ENCODE measurements at regions of chr20 and their contacts with region 1.

Region 1: GRCh38 chr20:38412877-38413577 is 22.1 kb downstream of the SNHG17 start:
- DNase-seq: peak in 1 of 2 experiments; percentile 34
- H3K4me3 ChIP-seq: no peak overlapping the region
- H3K4me3 Mint-ChIP-seq: no peak overlapping the region
- H3K27ac Mint-ChIP-seq: no peak overlapping the region
- H3K4me1 ChIP-seq: peaks cover 7% of the 10 kb centered on the region; the same call in 1 of the 2 replicates
- H3K4me1 Mint-ChIP-seq: peaks cover 9% of the 10 kb centered on the region
- H3K27me3 ChIP-seq: no peaks in the 10 kb centered on the region
- H3K27me3 Mint-ChIP-seq: no peaks in the 10 kb centered on the region
- CTCF ChIP-seq: no peak

Region 2: GRCh38 chr20:38229376-38230252 is 183.4 kb before region 1 on chr20:
- CTCF ChIA-PET with region 1: interaction called, 8 read pairs
- POLR2A ChIA-PET with region 1: no interaction called
- intact Hi-C with region 1: loop called (anchors 1 kb)
- DNase-seq: peak in 1 of 2 experiments; percentile 65
- H3K4me3 ChIP-seq: no peak overlapping the region
- H3K4me3 Mint-ChIP-seq: no peak overlapping the region
- H3K27ac Mint-ChIP-seq: no peak overlapping the region
- H3K4me1 ChIP-seq: no peaks in the 10 kb centered on the region
- H3K4me1 Mint-ChIP-seq: no peaks in the 10 kb centered on the region
- H3K27me3 ChIP-seq: no peaks in the 10 kb centered on the region
- H3K27me3 Mint-ChIP-seq: peaks cover 2% of the 10 kb centered on the region
- CTCF ChIP-seq: peak; percentile 63 to 65

Region 3: GRCh38 chr20:38321959-38322598 is 90.9 kb before region 1 on chr20:
- CTCF ChIA-PET with region 1: interaction called, 9 read pairs
- POLR2A ChIA-PET with region 1: no interaction called
- intact Hi-C with region 1: loop called (anchors 1 kb)
- DNase-seq: peak in 1 of 2 experiments; percentile 76
- H3K4me3 ChIP-seq: no peak overlapping the region
- H3K4me3 Mint-ChIP-seq: no peak overlapping the region
- H3K27ac Mint-ChIP-seq: no peak overlapping the region
- H3K4me1 ChIP-seq: no peaks in the 10 kb centered on the region
- H3K4me1 Mint-ChIP-seq: peaks cover 5% of the 10 kb centered on the region
- H3K27me3 ChIP-seq: no peaks in the 10 kb centered on the region
- H3K27me3 Mint-ChIP-seq: peaks cover 25% of the 10 kb centered on the region
- CTCF ChIP-seq: peak; percentile 93 to 97

Region 4: GRCh38 chr20:38337561-38338140 is 75.4 kb before region 1 on chr20:
- CTCF ChIA-PET with region 1: interaction called, 170 read pairs
- POLR2A ChIA-PET with region 1: interaction called, 3 read pairs
- intact Hi-C with region 1: loop called (anchors 1 kb)
- DNase-seq: peak; percentile 73 to 79
- H3K4me3 ChIP-seq: no peak overlapping the region
- H3K4me3 Mint-ChIP-seq: no peak overlapping the region
- H3K27ac Mint-ChIP-seq: no peak overlapping the region
- H3K4me1 ChIP-seq: peaks cover 1% of the 10 kb centered on the region; the same call in 1 of the 2 replicates
- H3K4me1 Mint-ChIP-seq: peaks cover 5% of the 10 kb centered on the region
- H3K27me3 ChIP-seq: no peaks in the 10 kb centered on the region
- H3K27me3 Mint-ChIP-seq: peaks cover 6% of the 10 kb centered on the region
- CTCF ChIP-seq: peak; percentile 66 to 75

Region 5: DNA sequence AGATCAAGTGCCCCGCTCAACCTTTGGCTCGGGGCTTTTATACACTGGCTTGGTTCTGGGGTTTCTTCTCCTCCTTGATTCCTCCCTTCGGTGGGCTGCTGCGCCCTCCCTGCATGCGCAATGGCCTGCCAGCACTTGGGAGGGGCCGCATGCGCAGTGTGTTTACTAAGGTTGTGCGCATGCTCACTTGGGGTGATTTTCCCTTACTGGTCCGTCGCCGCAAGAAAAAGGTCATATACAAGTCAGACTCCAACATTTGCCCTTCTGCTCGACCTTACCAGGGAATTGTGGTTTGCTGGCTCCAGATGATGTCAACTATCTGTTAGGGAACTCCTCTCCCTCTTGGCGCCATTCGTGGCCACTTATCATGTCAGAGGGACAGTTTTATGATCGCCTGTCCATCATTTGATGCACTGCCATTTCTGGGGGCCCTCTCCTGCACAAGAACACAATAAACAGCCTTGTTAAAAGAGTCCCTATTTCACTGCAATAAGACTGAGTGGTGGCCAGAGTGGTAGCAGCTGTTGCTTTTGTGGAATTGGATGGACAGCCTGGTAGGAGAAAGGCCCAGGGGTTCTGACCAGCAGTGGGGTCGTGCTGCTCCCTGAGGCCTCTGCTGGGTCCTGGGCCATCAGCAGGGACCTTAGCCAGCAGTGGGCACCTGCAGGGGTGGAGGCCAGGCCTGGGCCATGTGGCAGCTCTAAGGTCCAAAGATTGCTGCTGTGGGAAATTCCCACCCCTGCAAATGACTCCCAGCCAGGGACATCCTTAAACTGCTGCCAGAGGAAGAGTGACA is 69.5 kb before region 1 on chr20:
- CTCF ChIA-PET with region 1: interaction called, 170 read pairs
- POLR2A ChIA-PET with region 1: interaction called, 3 read pairs
- intact Hi-C with region 1: loop called (anchors 1 kb)
- DNase-seq: peak; percentile 65 to 79
- H3K4me3 ChIP-seq: peak overlapping the region; percentile 19
- H3K4me3 Mint-ChIP-seq: peak overlapping the region; percentile 50
- H3K27ac Mint-ChIP-seq: no peak overlapping the region
- H3K4me1 ChIP-seq: peaks cover 16% of the 10 kb centered on the region
- H3K4me1 Mint-ChIP-seq: peaks cover 5% of the 10 kb centered on the region
- H3K27me3 ChIP-seq: no peaks in the 10 kb centered on the region
- H3K27me3 Mint-ChIP-seq: no peaks in the 10 kb centered on the region
- CTCF ChIP-seq: no peak

Region 6: GRCh38 chr20:38369389-38369788 is 43.6 kb before region 1 on chr20:
- CTCF ChIA-PET with region 1: interaction called, 20 read pairs
- POLR2A ChIA-PET with region 1: no interaction called
- intact Hi-C with region 1: loop called (anchors 1 kb)
- DNase-seq: peak in 1 of 2 experiments; percentile 46
- H3K4me3 ChIP-seq: 0 out of 2 replicates have a peak overlapping the region, but pooled peaks have one; percentile 3
- H3K4me3 Mint-ChIP-seq: peak overlapping the region; percentile 19
- H3K27ac Mint-ChIP-seq: no peak overlapping the region
- H3K4me1 ChIP-seq: peaks cover 15% of the 10 kb centered on the region
- H3K4me1 Mint-ChIP-seq: peaks cover 11% of the 10 kb centered on the region
- H3K27me3 ChIP-seq: no peaks in the 10 kb centered on the region
- H3K27me3 Mint-ChIP-seq: no peaks in the 10 kb centered on the region
- CTCF ChIP-seq: no peak

Region 7: GRCh38 chr20:38387953-38388352 is 25.1 kb before region 1 on chr20:
- CTCF ChIA-PET with region 1: interaction called, 10 read pairs
- POLR2A ChIA-PET with region 1: no interaction called
- intact Hi-C with region 1: loop called (anchors 2 kb)
- DNase-seq: peak in 1 of 2 experiments; percentile 20
- H3K4me3 ChIP-seq: no peak overlapping the region
- H3K4me3 Mint-ChIP-seq: no peak overlapping the region
- H3K27ac Mint-ChIP-seq: no peak overlapping the region
- H3K4me1 ChIP-seq: no peaks in the 10 kb centered on the region
- H3K4me1 Mint-ChIP-seq: no peaks in the 10 kb centered on the region
- H3K27me3 ChIP-seq: peaks cover 2% of the 10 kb centered on the region; the same call in 1 of the 2 replicates
- H3K27me3 Mint-ChIP-seq: no peaks in the 10 kb centered on the region
- CTCF ChIP-seq: peak in 1 of 2 experiments; percentile 30

Region 8: DNA sequence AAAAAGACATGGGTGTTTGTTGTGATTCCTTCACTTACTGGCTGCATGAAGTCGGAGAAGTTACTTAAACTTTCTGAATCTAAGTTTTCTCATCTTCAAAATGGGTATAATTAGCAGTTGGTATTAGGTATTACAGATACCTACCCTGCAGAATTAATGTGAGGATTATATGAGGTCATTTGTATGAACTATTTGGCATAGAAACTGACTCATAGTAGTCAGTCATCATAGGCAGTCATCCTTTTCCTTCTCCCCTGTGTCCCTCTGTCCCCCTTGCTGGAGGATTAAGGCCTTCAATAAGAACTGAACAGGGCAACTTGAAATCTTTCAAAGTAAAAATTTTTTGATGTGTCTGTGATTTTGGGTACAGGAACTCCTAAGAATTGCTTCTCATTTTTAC is 85.9 kb after region 1 on chr20:
- CTCF ChIA-PET with region 1: no interaction called
- POLR2A ChIA-PET with region 1: no interaction called
- intact Hi-C with region 1: no loop called
- DNase-seq: no peak
- H3K4me3 ChIP-seq: no peak overlapping the region
- H3K4me3 Mint-ChIP-seq: no peak overlapping the region
- H3K27ac Mint-ChIP-seq: no peak overlapping the region
- H3K4me1 ChIP-seq: no peaks in the 10 kb centered on the region
- H3K4me1 Mint-ChIP-seq: no peaks in the 10 kb centered on the region
- H3K27me3 ChIP-seq: no peaks in the 10 kb centered on the region
- H3K27me3 Mint-ChIP-seq: no peaks in the 10 kb centered on the region
- CTCF ChIP-seq: no peak